Stomach (tissue), 19 donors: ENCODE measurements at regions of chr5 and their contacts with region 1.

Region 1: GRCh38 chr5:1167728-1168709 is 33.4 kb upstream of the SLC6A19 start:
- DNase-seq: peak; percentile 79 to 92
- H3K4me3 ChIP-seq: peak overlapping the region in 3 of 4 donors; percentile 7 to 33 (median 19)
- H3K27ac ChIP-seq: no peak overlapping the region
- H3K4me1 ChIP-seq: peaks cover 9 to 11% (median 10%) of the 10 kb centered on the region in 4 donors
- H3K27me3 ChIP-seq: peaks cover 0 to 38% (median 0%) of the 10 kb centered on the region in 3 donors
- CTCF ChIP-seq: peak in 5 of 7 experiments; percentile 21 to 74 (median 65)
- EP300 ChIP-seq: no peak
- POLR2A ChIP-seq: no peak

Region 2: GRCh38 chr5:431001-431710 is 736.9 kb before region 1 on chr5:
- intact Hi-C with region 1: no loop called
- DNase-seq: peak; percentile 44 to 81
- H3K4me3 ChIP-seq: no peak overlapping the region
- H3K27ac ChIP-seq: no peak overlapping the region
- H3K4me1 ChIP-seq: no peaks in the 10 kb centered on the region
- H3K27me3 ChIP-seq: peaks cover 0 to 39% (median 0%) of the 10 kb centered on the region in 3 donors
- CTCF ChIP-seq: peak in 5 of 7 experiments; percentile 21 to 59 (median 47)
- EP300 ChIP-seq: no peak
- POLR2A ChIP-seq: no peak

Region 3: DNA sequence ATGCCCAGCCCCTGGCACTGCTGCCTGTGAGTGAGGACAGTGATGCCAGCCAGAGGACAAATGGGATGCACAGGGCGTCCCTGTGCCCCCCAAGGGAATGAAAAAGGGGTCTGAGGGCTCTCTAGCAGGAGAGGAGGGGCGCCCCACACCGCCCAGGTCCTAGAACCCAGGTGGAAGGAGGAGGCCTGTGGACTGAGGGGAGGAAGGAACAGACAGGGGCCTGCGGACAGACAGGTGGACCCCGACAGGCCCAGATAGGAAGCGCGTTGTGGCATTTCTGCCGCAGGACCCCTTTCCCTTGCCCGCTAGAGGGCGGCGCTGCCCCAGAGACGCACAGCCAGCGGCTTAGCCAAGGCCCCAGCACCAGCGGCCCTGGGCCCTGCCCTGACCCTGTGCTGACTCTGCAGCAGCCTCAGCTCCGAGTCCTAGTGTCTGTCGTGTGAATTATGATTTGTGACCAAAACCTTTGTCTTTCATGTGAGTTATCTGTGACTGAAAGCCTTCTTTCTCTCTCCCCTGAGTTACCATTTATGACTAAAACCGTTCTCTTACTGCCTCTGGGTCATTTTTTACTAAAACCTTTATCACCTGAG is 244.6 kb before region 1 on chr5:
- intact Hi-C with region 1: loop called (anchors 10 kb)
- DNase-seq: peak; percentile 84 to 93
- H3K4me3 ChIP-seq: no peak overlapping the region
- H3K27ac ChIP-seq: no peak overlapping the region
- H3K4me1 ChIP-seq: peaks cover 9 to 17% (median 16%) of the 10 kb centered on the region in 4 donors
- H3K27me3 ChIP-seq: peaks cover 0 to 41% (median 16%) of the 10 kb centered on the region in 3 donors
- CTCF ChIP-seq: peak in 5 of 7 experiments; percentile 70 to 83 (median 77)
- EP300 ChIP-seq: no peak
- POLR2A ChIP-seq: no peak

Region 4: GRCh38 chr5:1641560-1642166 is 473.6 kb after region 1 on chr5:
- intact Hi-C with region 1: loop called (anchors 5 kb)
- DNase-seq: peak; percentile 86 to 96
- H3K4me3 ChIP-seq: no peak overlapping the region
- H3K27ac ChIP-seq: no peak overlapping the region
- H3K4me1 ChIP-seq: peaks cover 0 to 22% (median 8%) of the 10 kb centered on the region in 4 donors
- H3K27me3 ChIP-seq: peaks cover 8 to 32% (median 26%) of the 10 kb centered on the region in 3 donors
- CTCF ChIP-seq: peak in 5 of 7 experiments; percentile 74 to 85 (median 82)
- EP300 ChIP-seq: no peak
- POLR2A ChIP-seq: no peak